HepG2 (cell line): ENCODE measurements at regions of chr1 and their contacts with region 1.

Region 1: GRCh38 chr1:88595355-88596002 is 88.6 kb upstream of the PKN2 start:
- DNase-seq: peak; percentile 65
- ATAC-seq: peak; percentile 73
- H3K4me3 ChIP-seq: no peak overlapping the region
- H3K27ac ChIP-seq: no peak overlapping the region
- H3K4me1 ChIP-seq: no peaks in the 10 kb centered on the region
- H3K27me3 ChIP-seq: no peaks in the 10 kb centered on the region
- CTCF ChIP-seq: peak; percentile 71
- EP300 ChIP-seq: no peak
- POLR2A ChIP-seq: no peak
- RAD21 ChIP-seq: peak; percentile 42; the same call in 1 of the 2 replicates

Region 2: DNA sequence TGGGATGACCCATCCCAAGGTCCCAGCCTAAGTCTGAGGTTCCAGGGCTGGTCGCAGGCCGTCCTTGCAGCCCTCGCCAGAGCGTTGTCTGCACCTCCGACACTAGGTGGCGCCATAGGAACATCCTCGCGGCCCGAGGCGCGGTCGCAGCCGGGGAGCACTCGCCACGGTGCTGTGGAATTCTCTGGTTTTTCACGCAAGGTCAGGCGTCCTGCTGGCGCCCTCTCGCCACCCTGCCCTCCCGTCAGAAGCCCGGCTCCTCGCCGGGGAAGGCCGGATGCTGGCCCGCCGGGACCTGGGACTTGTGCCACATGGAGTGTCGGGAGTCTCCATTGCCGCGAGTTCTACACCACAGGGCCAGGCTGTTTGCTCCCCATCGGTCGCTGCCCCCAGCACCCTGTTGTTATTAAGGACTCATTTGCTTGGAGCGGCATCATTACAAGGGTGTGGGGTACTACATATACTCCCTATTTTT is 1463.6 kb before region 1 on chr1:
- CTCF ChIA-PET with region 1: no interaction called
- POLR2A ChIA-PET with region 1: no interaction called
- in situ Hi-C with region 1: no loop called
- intact Hi-C with region 1: loop called (anchors 5 kb)
- DNase-seq: peak; percentile 47
- ATAC-seq: peak; percentile 97
- H3K4me3 ChIP-seq: peak overlapping the region; percentile 41 to 70 (median 42); a peak in 5 of 6 replicates
- H3K27ac ChIP-seq: no peak overlapping the region
- H3K4me1 ChIP-seq: no peaks in the 10 kb centered on the region
- H3K27me3 ChIP-seq: peaks cover 3 to 33% of the 10 kb centered on the region in 2 experiments; a peak in 3 of 5 replicates
- CTCF ChIP-seq: peak; percentile 98
- EP300 ChIP-seq: no peak
- POLR2A ChIP-seq: no peak
- RAD21 ChIP-seq: peak; percentile 94

Region 3: DNA sequence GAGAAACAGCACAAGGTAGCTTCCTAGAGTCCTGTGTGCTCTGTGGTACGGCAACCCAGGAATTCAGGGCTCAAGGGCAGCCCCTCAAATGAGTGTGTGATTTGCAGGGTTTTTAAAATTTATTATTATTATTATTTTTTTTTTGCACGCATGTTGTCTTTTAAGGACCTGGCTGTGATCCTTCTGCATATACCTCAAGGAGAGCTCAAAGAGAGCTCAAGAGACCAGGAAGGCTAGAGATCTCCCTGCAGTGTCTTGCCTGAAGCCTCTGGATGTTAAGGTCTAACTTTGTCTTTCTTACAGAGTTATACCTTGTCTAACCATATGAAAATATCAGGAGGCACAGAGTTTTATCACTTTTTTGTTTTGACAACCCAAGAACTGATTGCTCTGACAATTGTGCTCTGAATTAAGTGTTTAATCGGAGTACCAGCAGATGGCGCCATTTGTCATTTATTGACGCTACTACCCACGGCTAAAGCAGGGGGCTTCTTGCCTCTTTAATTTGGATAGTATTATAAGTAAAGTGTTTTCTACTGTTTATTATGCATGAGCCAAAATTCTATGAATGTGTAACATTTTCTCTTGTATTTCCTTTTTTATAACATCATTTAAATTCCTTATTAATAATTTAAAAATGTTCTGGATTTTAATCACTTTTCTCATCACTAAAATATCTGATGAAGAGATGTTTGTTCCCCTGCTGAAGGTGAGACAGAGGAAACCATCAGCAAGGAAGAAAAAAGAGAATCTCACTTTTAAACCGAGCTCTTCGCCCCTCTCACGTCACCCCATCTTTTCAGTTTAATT is 1302.6 kb before region 1 on chr1:
- CTCF ChIA-PET with region 1: interaction called, 6 read pairs
- POLR2A ChIA-PET with region 1: no interaction called
- in situ Hi-C with region 1: no loop called
- intact Hi-C with region 1: loop called (anchors 1 kb)
- DNase-seq: peak; percentile 54
- ATAC-seq: peak; percentile 80
- H3K4me3 ChIP-seq: no peak overlapping the region
- H3K27ac ChIP-seq: no peak overlapping the region
- H3K4me1 ChIP-seq: no peaks in the 10 kb centered on the region
- H3K27me3 ChIP-seq: no peaks in the 10 kb centered on the region; a peak in 1 of 5 replicates
- CTCF ChIP-seq: peak; percentile 75
- EP300 ChIP-seq: no peak
- POLR2A ChIP-seq: no peak
- RAD21 ChIP-seq: peak; percentile 46; the same call in 1 of the 2 replicates

Region 4: DNA sequence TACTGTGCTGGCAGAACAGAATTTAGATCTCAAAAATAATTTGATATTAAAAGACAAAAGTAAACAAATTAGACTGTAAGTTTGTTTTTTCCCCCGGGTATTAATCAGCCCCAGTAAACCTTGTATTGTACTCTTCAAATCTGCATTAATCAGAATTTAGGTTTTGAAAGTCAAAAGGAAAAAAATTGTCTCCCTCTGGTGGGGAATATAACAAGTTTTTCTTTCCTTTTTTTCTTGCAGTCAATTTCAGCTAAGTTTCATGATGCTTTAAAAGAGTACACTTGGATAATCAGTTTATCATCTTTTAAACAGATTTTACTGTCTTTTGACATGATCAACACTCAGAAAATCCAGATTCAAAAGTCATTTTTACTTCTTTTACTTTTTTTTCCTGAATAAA is 45.9 kb before region 1 on chr1:
- CTCF ChIA-PET with region 1: no interaction called
- POLR2A ChIA-PET with region 1: no interaction called
- in situ Hi-C with region 1: no loop called
- intact Hi-C with region 1: loop called (anchors 1 kb)
- DNase-seq: no peak
- ATAC-seq: no peak
- H3K4me3 ChIP-seq: no peak overlapping the region
- H3K27ac ChIP-seq: no peak overlapping the region
- H3K4me1 ChIP-seq: no peaks in the 10 kb centered on the region
- H3K27me3 ChIP-seq: no peaks in the 10 kb centered on the region
- CTCF ChIP-seq: no peak
- EP300 ChIP-seq: no peak
- POLR2A ChIP-seq: no peak
- RAD21 ChIP-seq: no peak